Calu3 (cell line): ENCODE measurements at regions of chr2 and their contacts with region 1.

Region 1: GRCh38 chr2:168246483-168247340 is 683 bp downstream of the STK39 start:
- DNase-seq: peak; percentile 68
- H3K4me3 Mint-ChIP-seq: no peak overlapping the region
- H3K27ac Mint-ChIP-seq: peak overlapping the region; percentile 88
- H3K4me1 Mint-ChIP-seq: peaks cover 24% of the 10 kb centered on the region
- H3K27me3 Mint-ChIP-seq: no peaks in the 10 kb centered on the region
- CTCF ChIP-seq: no peak

Region 2: GRCh38 chr2:168136392-168136977 is 110.2 kb before region 1 on chr2:
- CTCF ChIA-PET with region 1: interaction called, 4 read pairs
- intact Hi-C with region 1: loop called (anchors 5 kb)
- DNase-seq: no peak
- H3K4me3 Mint-ChIP-seq: no peak overlapping the region
- H3K27ac Mint-ChIP-seq: peak overlapping the region; percentile 97
- H3K4me1 Mint-ChIP-seq: peaks cover 62% of the 10 kb centered on the region
- H3K27me3 Mint-ChIP-seq: no peaks in the 10 kb centered on the region
- CTCF ChIP-seq: peak; percentile 46

Region 3: DNA sequence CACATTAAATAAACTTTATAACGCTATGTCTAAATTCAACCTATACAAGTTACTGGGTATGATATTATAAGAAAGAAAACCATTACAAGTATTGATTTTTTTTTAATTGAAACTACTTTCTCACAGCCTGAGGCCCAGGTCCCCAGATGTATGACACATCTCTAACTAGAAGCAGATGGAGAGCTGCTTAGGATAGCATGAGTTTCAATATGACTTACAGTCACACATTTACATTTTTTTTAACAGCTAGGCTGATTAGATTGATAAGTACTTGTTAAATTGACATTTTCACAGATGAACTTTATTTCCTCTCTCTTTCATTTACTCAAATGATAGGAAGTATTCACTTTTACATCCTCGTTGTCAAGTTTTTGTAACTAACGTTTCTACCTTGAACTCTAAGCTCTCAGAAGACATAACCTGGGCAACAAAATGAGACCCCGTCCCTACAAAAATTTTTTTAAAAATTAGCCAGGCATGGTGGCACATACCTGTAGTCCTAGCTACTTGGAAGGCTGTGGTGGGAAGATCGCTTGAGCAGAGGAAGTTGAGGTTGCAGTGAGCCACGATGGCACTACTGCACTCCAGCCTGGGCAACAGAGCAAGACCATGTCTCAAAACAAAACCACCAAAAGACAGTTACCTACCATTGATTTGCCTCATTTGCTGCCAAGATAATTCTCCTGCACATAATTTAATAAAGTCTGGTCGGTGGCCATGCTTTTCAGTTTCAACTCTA is 51.8 kb before region 1 on chr2:
- CTCF ChIA-PET with region 1: no interaction called
- intact Hi-C with region 1: loop called (anchors 5 kb)
- DNase-seq: no peak
- H3K4me3 Mint-ChIP-seq: no peak overlapping the region
- H3K27ac Mint-ChIP-seq: peak overlapping the region; percentile 47
- H3K4me1 Mint-ChIP-seq: peaks cover 79% of the 10 kb centered on the region
- H3K27me3 Mint-ChIP-seq: no peaks in the 10 kb centered on the region
- CTCF ChIP-seq: no peak

Region 4: GRCh38 chr2:168210895-168211570 is 35.7 kb before region 1 on chr2:
- CTCF ChIA-PET with region 1: no interaction called
- intact Hi-C with region 1: loop called (anchors 5 kb)
- DNase-seq: no peak
- H3K4me3 Mint-ChIP-seq: peak overlapping the region; percentile 56
- H3K27ac Mint-ChIP-seq: peak overlapping the region; percentile 98
- H3K4me1 Mint-ChIP-seq: peaks cover 86% of the 10 kb centered on the region
- H3K27me3 Mint-ChIP-seq: no peaks in the 10 kb centered on the region
- CTCF ChIP-seq: no peak

Region 5: GRCh38 chr2:168220965-168221819 is 25.5 kb before region 1 on chr2:
- CTCF ChIA-PET with region 1: no interaction called
- intact Hi-C with region 1: loop called (anchors 2 kb)
- DNase-seq: no peak
- H3K4me3 Mint-ChIP-seq: peak overlapping the region; percentile 62
- H3K27ac Mint-ChIP-seq: peak overlapping the region; percentile 88
- H3K4me1 Mint-ChIP-seq: peaks cover 79% of the 10 kb centered on the region
- H3K27me3 Mint-ChIP-seq: no peaks in the 10 kb centered on the region
- CTCF ChIP-seq: no peak